HepG2 (cell line): ENCODE measurements at regions of chr13 and their contacts with region 1.

Region 1: DNA sequence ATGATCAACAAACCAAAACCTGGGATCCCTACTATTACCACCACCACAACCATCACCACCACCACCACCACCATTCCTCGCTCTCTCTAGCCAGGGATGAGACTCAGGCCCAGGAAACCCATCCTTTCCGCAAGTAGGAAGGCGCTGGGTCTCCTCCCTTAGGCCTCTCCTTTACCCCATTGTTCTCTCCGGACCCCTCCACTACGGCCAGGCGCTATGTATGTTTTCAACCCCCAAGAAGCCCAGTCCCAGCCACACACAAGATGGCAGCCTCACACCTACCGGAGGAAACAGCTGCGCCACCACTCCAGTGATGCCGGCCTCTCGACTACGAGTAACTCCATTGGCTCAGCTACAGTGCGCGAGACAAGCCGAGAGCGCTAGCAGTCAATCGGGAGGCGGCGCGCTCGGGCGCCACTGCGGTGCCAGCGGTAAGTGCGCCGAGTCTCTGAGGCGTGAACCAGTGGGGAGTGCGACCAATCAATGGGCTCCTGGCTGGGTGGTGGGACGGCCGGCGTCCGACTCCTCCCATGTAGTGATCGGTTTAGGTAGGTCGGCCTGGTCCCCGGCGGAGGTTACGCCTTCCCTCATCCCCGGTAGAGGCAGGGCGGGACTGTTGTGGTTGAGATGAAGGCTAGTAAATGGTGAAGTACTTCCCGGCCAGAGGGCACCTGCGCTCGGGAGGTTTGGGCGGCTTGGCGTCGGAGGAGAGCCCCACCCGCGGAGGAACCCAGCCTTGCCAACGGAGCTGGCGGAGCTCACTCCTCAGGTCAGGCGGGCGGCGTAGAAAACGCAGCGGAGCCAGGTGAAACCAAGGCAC is at the starts of genes CAB39L and SETDB2:
- DNase-seq: peak; percentile 98
- ATAC-seq: peak; percentile 96
- H3K4me3 ChIP-seq: peak within 1 kb of the TSS; percentile 77 to 89 (median 83)
- H3K27ac ChIP-seq: peak within 1 kb of the TSS; percentile 94
- H3K4me1 ChIP-seq: peaks cover 35% of the 10 kb centered on the region
- H3K27me3 ChIP-seq: no peaks in the 10 kb centered on the region; a peak in 1 of 5 replicates
- CTCF ChIP-seq: peak; percentile 80
- EP300 ChIP-seq: 0 out of 4 replicates have a peak, but pooled peaks of 1 of the 2 experiments have one; percentile 17
- POLR2A ChIP-seq: peak; percentile 76
- RAD21 ChIP-seq: peak; percentile 46
- total RNA-seq, gene CAB39L: 6.1 and 8.3 TPM in 2 replicates
- total RNA-seq, gene SETDB2: 8.7 and 9.5 TPM in 2 replicates

Region 2: GRCh38 chr13:49314344-49314882 is 129.5 kb before region 1 on chr13:
- CTCF ChIA-PET with region 1: no interaction called
- POLR2A ChIA-PET with region 1: interaction called, 13 read pairs
- in situ Hi-C with region 1: no loop called
- intact Hi-C with region 1: no loop called
- DNase-seq: no peak
- ATAC-seq: no peak
- H3K4me3 ChIP-seq: peak overlapping the region in 2 of 3 experiments; percentile 1 to 58; a peak in 4 of 6 replicates
- H3K27ac ChIP-seq: peak overlapping the region; percentile 51
- H3K4me1 ChIP-seq: peaks cover 18% of the 10 kb centered on the region
- H3K27me3 ChIP-seq: no peaks in the 10 kb centered on the region
- CTCF ChIP-seq: no peak
- EP300 ChIP-seq: no peak
- POLR2A ChIP-seq: no peak
- RAD21 ChIP-seq: no peak

Region 3: GRCh38 chr13:49481788-49482187 is 37.9 kb after region 1 on chr13:
- CTCF ChIA-PET with region 1: no interaction called
- POLR2A ChIA-PET with region 1: interaction called, 12 read pairs
- in situ Hi-C with region 1: no loop called
- intact Hi-C with region 1: no loop called
- DNase-seq: no peak
- ATAC-seq: no peak
- H3K4me3 ChIP-seq: no peak overlapping the region
- H3K27ac ChIP-seq: no peak overlapping the region
- H3K4me1 ChIP-seq: peaks cover 26% of the 10 kb centered on the region
- H3K27me3 ChIP-seq: no peaks in the 10 kb centered on the region
- CTCF ChIP-seq: no peak
- EP300 ChIP-seq: no peak
- POLR2A ChIP-seq: no peak
- RAD21 ChIP-seq: no peak

Region 4: GRCh38 chr13:49585220-49586157 is 141.6 kb after region 1 on chr13 and contains the start of gene RCBTB1:
- CTCF ChIA-PET with region 1: no interaction called
- POLR2A ChIA-PET with region 1: interaction called, 15 read pairs
- in situ Hi-C with region 1: no loop called
- intact Hi-C with region 1: no loop called
- DNase-seq: peak; percentile 52
- ATAC-seq: peak; percentile 92
- H3K4me3 ChIP-seq: peak within 1 kb of the TSS; percentile 82 to 93 (median 89)
- H3K27ac ChIP-seq: peak within 1 kb of the TSS; percentile 69
- H3K4me1 ChIP-seq: peaks cover 61% of the 10 kb centered on the region
- H3K27me3 ChIP-seq: no peaks in the 10 kb centered on the region; a peak in 1 of 5 replicates
- CTCF ChIP-seq: no peak; the same call in 1 of the 2 replicates
- EP300 ChIP-seq: no peak
- POLR2A ChIP-seq: peak; percentile 34 to 62; a peak in 3 of 4 replicates
- RAD21 ChIP-seq: no peak
- total RNA-seq, gene RCBTB1: 21.6 and 28.3 TPM in 2 replicates

Region 5: GRCh38 chr13:49655906-49656305 is 212.0 kb after region 1 on chr13:
- CTCF ChIA-PET with region 1: no interaction called
- POLR2A ChIA-PET with region 1: no interaction called
- in situ Hi-C with region 1: no loop called
- intact Hi-C with region 1: no loop called
- DNase-seq: no peak
- ATAC-seq: no peak
- H3K4me3 ChIP-seq: no peak overlapping the region
- H3K27ac ChIP-seq: no peak overlapping the region
- H3K4me1 ChIP-seq: peaks cover 5% of the 10 kb centered on the region; the same call in 1 of the 2 replicates
- H3K27me3 ChIP-seq: no peaks in the 10 kb centered on the region
- CTCF ChIP-seq: no peak
- EP300 ChIP-seq: no peak
- POLR2A ChIP-seq: no peak
- RAD21 ChIP-seq: no peak